Panc1 (cell line): ENCODE measurements at regions of chr11 and their contacts with region 1.

Region 1: GRCh38 chr11:110199184-110199941 is 97.1 kb downstream of the RDX start:
- DNase-seq: no peak
- ATAC-seq: no peak
- H3K4me3 ChIP-seq: no peak overlapping the region
- H3K27ac ChIP-seq: no peak overlapping the region
- H3K4me1 ChIP-seq: peaks cover 8% of the 10 kb centered on the region; the same call in 1 of the 2 replicates
- H3K27me3 ChIP-seq: no peaks in the 10 kb centered on the region
- CTCF ChIP-seq: no peak

Region 2: DNA sequence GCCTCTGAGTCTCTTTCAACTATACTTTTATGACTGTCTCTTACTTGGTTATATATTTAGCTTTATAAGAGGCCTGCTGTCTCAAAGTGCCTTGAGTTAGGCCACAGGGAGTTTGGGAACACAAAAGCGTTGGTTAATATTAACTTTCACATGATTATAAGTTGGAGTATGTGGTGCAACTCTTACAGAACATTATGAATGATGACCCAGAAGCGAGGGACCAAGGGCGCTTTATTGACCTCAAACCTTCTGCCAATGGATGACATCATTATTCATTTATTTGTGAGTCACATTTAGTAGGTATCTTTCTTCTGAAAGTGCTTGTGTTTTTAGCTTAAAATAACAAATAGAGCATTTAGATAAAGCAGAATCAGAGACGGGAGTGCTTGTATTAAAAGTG is 404.1 kb before region 1 on chr11:
- CTCF ChIA-PET with region 1: no interaction called
- POLR2A ChIA-PET with region 1: no interaction called
- in situ Hi-C with region 1: no loop called
- intact Hi-C with region 1: no loop called
- DNase-seq: no peak
- ATAC-seq: no peak
- H3K4me3 ChIP-seq: no peak overlapping the region
- H3K27ac ChIP-seq: no peak overlapping the region
- H3K4me1 ChIP-seq: no peaks in the 10 kb centered on the region
- H3K27me3 ChIP-seq: no peaks in the 10 kb centered on the region
- CTCF ChIP-seq: no peak

Region 3: GRCh38 chr11:110098645-110099044 is 100.7 kb before region 1 on chr11:
- CTCF ChIA-PET with region 1: no interaction called
- POLR2A ChIA-PET with region 1: no interaction called
- in situ Hi-C with region 1: no loop called
- intact Hi-C with region 1: no loop called
- DNase-seq: no peak
- ATAC-seq: peak; percentile 73
- H3K4me3 ChIP-seq: no peak overlapping the region
- H3K27ac ChIP-seq: no peak overlapping the region
- H3K4me1 ChIP-seq: peaks cover 34% of the 10 kb centered on the region
- H3K27me3 ChIP-seq: no peaks in the 10 kb centered on the region
- CTCF ChIP-seq: no peak

Region 4: GRCh38 chr11:110173811-110174644 is 25.3 kb before region 1 on chr11:
- CTCF ChIA-PET with region 1: no interaction called
- POLR2A ChIA-PET with region 1: no interaction called
- in situ Hi-C with region 1: no loop called
- intact Hi-C with region 1: no loop called
- DNase-seq: no peak
- ATAC-seq: peak; percentile 86
- H3K4me3 ChIP-seq: no peak overlapping the region
- H3K27ac ChIP-seq: no peak overlapping the region
- H3K4me1 ChIP-seq: no peaks in the 10 kb centered on the region; the same call in 1 of the 2 replicates
- H3K27me3 ChIP-seq: no peaks in the 10 kb centered on the region
- CTCF ChIP-seq: peak; percentile 96

Region 5: DNA sequence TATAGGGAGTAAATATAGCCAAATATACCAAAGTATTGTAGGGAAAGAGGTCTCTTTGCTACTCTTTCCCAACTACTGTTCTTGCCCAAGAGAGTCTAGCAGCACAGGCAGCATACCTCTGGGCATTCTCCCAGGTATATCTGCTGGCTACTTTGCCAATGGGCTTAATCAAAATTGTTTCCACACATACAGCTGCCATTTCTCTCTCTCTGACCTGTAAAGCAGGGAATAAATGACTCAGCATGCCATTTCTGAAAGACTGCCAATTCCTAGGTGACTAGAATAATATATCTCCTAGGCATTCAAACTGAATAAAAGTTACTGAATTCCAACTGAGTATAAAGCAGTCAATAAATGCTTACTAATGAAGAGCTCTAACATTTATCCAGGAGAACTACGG is 52.5 kb after region 1 on chr11:
- CTCF ChIA-PET with region 1: no interaction called
- POLR2A ChIA-PET with region 1: no interaction called
- in situ Hi-C with region 1: no loop called
- intact Hi-C with region 1: loop called (anchors 5 kb)
- DNase-seq: peak; percentile 25
- ATAC-seq: peak; percentile 78
- H3K4me3 ChIP-seq: no peak overlapping the region
- H3K27ac ChIP-seq: no peak overlapping the region
- H3K4me1 ChIP-seq: peaks cover 8% of the 10 kb centered on the region
- H3K27me3 ChIP-seq: no peaks in the 10 kb centered on the region
- CTCF ChIP-seq: no peak

Region 6: DNA sequence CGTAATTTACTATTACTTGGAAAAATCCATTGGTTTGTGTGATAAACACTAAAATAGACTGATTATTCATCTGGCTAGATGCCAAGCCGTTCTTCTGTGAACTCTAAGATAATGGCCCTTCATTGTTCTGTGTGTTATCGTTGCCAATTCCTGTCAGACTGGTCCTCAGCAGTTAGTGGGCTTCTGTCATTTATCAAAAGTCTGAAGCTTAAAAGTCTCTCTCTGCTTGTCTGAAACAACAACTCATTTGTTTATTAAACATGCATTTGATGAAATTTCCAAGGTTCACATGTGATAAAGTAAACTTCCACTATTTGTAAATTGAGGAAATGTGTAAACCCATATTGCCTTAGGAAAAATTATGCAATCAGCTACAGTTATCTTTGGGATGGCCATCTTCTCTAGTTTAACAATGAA is 118.2 kb after region 1 on chr11:
- CTCF ChIA-PET with region 1: no interaction called
- POLR2A ChIA-PET with region 1: no interaction called
- in situ Hi-C with region 1: no loop called
- intact Hi-C with region 1: no loop called
- DNase-seq: no peak
- ATAC-seq: no peak
- H3K4me3 ChIP-seq: no peak overlapping the region
- H3K27ac ChIP-seq: no peak overlapping the region
- H3K4me1 ChIP-seq: no peaks in the 10 kb centered on the region
- H3K27me3 ChIP-seq: no peaks in the 10 kb centered on the region
- CTCF ChIP-seq: no peak

Region 7: GRCh38 chr11:110362971-110363509 is 163.7 kb after region 1 on chr11:
- CTCF ChIA-PET with region 1: interaction called, 11 read pairs
- POLR2A ChIA-PET with region 1: no interaction called
- in situ Hi-C with region 1: no loop called
- intact Hi-C with region 1: loop called (anchors 2 kb)
- DNase-seq: no peak
- ATAC-seq: peak; percentile 95
- H3K4me3 ChIP-seq: peak overlapping the region in 1 of 2 experiments; percentile 45; a peak in 2 of 4 replicates
- H3K27ac ChIP-seq: peak overlapping the region; percentile 90
- H3K4me1 ChIP-seq: peaks cover 21% of the 10 kb centered on the region
- H3K27me3 ChIP-seq: no peaks in the 10 kb centered on the region
- CTCF ChIP-seq: no peak

Region 8: GRCh38 chr11:110376711-110377324 is 177.5 kb after region 1 on chr11:
- CTCF ChIA-PET with region 1: no interaction called
- POLR2A ChIA-PET with region 1: no interaction called
- in situ Hi-C with region 1: no loop called
- intact Hi-C with region 1: loop called (anchors 1 kb)
- DNase-seq: peak; percentile 46
- ATAC-seq: peak; percentile 94
- H3K4me3 ChIP-seq: no peak overlapping the region
- H3K27ac ChIP-seq: 0 out of 2 replicates have a peak overlapping the region, but pooled peaks have one; percentile 10
- H3K4me1 ChIP-seq: peaks cover 9% of the 10 kb centered on the region; the same call in 1 of the 2 replicates
- H3K27me3 ChIP-seq: no peaks in the 10 kb centered on the region
- CTCF ChIP-seq: peak; percentile 90

Region 9: DNA sequence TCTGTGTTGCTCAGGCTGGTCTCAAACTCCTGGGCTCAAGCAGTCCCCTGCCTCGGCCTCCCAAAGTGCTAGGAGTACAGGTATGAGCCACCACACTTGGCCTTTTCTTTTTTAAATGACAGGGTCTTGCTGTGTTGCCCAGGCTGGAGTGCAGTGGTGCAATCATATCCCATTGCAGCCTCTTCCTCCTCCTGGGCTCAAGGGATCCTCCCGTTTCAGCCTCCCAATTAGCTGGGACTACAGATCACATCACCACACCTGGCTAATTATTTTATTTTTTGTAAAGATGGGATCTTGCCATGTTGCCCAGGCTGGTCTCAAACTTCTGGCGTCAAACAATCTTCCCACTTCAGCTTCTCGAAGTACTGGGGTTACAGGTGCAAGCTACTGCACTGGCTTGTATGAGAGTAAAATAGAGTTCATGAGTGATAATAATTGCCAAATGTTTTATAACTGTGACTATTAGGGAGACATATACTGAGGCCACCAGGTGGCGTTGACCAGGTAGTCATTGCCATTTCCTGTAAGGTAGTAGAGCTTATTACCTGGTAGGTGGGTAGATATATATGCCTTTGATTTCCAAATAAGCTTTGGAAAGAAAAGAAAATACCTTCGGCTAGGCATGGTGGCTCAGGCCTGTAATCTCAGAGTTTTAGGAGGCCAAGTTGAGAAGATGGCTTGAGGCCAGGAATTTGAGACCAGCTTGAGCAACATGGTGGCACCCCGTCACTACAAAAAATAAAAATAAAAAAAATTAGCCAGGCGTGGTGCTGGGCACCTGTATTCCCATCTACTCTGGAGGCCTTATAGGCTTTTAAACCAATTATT is 235.8 kb after region 1 on chr11:
- CTCF ChIA-PET with region 1: interaction called, 7 read pairs
- POLR2A ChIA-PET with region 1: no interaction called
- in situ Hi-C with region 1: no loop called
- intact Hi-C with region 1: loop called (anchors 1 kb)
- DNase-seq: no peak
- ATAC-seq: no peak
- H3K4me3 ChIP-seq: no peak overlapping the region
- H3K27ac ChIP-seq: no peak overlapping the region
- H3K4me1 ChIP-seq: peaks cover 25% of the 10 kb centered on the region
- H3K27me3 ChIP-seq: no peaks in the 10 kb centered on the region
- CTCF ChIP-seq: peak; percentile 74